Right ventricle myocardium inferior (tissue), 1 donor: ENCODE measurements at regions of chr1 and their contacts with region 1.

Region 1: DNA sequence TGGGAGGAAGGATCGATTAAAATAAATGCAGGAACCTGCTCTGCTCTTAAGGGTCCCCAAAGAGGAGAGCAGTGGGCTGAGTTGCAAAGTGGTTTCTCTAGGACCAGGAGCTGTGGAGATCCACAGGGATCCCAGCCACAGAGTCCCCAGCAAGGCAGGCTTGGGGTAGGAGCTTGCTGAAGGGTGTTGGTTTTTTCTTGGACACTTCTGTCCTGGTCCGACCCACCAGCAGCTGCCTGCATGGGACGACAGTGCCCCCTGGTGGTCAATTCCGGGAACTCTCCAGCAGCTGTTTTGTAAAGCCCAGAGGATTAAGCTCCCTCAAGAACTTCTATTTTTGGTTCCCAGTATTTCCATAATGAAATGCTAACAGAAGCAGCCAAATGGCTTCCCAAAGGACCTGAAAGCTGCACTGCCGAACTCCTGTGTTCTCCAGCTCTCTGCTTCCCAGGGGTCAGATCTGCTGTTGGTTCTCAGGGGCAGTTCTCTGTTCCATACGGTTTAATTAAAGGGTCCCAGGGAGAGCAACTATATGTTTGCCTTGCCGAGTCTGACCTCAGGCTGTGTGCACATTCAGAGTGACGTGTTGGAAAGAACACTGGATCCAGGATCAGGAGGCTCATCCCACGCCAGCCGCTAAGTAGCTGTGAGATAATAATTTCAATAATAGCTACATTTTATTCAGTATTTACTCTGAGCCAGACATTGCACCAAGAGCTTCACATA is 23.2 kb downstream of the NENF start:
- DNase-seq: peak; percentile 87
- ATAC-seq: peak; percentile 79

Region 2: DNA sequence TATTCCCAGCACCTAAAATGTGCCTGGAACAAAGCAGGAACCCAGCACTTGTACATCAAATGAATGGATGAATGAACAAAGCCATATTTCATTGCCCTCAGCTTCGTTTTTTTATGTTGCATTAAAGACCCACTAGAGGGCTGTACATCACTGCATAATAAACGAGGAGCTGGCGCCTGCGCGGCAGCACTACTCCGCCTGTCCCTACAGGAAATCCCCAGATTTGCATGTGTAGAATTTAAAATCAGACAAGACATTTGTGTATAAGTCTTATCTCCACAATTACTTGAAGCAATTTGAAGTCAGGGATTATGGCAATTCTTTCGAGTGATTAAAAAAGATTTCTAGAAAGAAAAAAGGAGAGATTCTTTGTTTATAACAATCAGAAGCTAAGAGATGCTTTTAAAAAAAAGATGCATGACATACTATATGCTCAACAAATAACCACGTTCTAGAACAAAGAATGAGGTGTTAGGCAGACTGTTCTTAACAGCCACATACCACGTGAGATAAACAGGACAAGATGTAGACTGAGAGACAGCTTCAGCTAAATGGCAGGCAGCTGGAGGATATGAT is 775.1 kb before region 1 on chr1:
- intact Hi-C with region 1: loop called (anchors 5 kb)
- DNase-seq: peak; percentile 74
- ATAC-seq: peak; percentile 92

Region 3: DNA sequence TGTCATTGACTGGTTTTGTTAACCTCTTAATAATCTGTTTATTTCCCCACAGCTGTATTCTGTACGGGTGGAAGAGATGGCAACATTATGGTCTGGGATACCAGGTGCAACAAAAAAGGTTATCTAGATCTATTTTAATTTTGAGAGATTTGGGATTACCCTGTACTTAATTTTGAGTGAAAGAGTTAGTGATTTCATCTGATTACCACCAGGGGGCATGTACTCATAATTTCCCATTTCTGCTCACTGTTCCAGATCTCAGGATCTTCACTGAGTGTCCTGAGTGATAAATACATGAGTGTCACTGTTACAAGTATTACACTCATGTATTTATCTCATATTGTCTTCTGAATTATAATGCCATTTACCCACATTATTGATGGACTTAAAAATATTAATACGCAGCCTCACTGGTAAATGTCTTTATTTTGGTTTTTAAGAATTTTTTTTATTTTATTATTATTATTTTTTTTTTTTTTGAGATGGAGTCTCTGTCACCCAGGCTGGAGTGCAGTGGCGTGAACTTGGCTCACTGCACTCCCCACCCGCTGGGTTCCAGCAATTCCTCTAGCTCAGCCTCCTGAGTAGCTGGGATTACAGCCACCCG is 393.0 kb before region 1 on chr1:
- intact Hi-C with region 1: loop called (anchors 2 kb)
- DNase-seq: no peak
- ATAC-seq: no peak

Region 4: GRCh38 chr1:212284744-212285684 is 171.0 kb before region 1 on chr1 and contains the start of gene PPP2R5A:
- intact Hi-C with region 1: loop called (anchors 5 kb)
- DNase-seq: peak; percentile 100
- ATAC-seq: peak; percentile 98
- total RNA-seq, gene PPP2R5A: 80.8 TPM

Region 5: GRCh38 chr1:212396638-212397037 is 59.3 kb before region 1 on chr1:
- intact Hi-C with region 1: no loop called
- DNase-seq: no peak
- ATAC-seq: no peak

Region 6: DNA sequence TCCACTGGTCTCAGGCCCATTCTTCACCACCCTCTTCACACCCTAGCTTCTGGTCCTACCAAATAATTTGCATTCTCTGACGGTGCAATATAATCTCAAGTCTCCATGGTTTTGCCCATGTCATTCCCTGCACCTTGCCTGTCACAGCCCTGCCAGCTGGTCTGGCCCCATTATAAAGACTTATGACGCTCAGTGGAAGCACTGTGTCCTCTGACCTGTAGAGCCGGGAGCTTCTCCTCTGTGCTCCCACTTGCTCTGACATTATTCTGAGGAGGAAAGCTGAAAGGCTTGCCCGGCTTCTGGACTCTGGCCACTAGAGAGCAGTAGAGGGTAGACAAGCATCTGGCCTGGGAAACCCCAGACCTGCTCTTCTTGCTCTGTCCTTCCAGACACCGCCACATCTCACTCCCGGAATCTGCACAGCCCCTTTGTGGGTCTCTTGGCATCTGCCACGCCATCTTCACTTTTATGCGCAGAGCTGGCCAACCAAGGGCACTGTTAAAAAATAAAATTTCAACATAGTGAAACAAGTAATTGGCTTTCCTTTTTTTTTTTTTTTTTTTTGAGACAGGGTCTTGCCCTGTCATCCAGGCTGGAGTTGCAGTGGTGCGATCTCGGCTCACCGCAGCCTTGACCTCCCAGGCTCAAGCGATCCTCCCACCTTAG is 21.2 kb after region 1 on chr1:
- intact Hi-C with region 1: no loop called
- DNase-seq: peak; percentile 80
- ATAC-seq: peak; percentile 95

Region 7: DNA sequence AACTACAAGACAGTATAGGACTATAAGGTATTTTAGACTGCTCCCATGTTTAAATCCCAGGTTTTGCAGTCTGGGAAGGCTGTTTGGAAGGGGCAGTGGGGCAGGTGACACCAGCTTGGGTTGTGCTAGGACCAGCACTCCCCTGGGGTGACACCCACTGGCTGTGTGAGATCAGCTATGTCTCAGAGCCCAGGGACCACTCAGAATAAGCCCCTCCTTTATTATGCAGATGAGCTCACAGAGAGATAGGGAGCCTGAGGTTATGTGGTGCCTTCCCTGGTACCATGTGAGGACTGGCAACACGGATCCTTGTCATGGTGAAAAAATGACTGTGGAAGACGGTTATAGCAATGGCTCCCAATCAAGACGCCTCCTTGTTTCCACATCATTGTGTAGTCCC is 47.7 kb after region 1 on chr1:
- intact Hi-C with region 1: no loop called
- DNase-seq: no peak
- ATAC-seq: no peak

Region 8: DNA sequence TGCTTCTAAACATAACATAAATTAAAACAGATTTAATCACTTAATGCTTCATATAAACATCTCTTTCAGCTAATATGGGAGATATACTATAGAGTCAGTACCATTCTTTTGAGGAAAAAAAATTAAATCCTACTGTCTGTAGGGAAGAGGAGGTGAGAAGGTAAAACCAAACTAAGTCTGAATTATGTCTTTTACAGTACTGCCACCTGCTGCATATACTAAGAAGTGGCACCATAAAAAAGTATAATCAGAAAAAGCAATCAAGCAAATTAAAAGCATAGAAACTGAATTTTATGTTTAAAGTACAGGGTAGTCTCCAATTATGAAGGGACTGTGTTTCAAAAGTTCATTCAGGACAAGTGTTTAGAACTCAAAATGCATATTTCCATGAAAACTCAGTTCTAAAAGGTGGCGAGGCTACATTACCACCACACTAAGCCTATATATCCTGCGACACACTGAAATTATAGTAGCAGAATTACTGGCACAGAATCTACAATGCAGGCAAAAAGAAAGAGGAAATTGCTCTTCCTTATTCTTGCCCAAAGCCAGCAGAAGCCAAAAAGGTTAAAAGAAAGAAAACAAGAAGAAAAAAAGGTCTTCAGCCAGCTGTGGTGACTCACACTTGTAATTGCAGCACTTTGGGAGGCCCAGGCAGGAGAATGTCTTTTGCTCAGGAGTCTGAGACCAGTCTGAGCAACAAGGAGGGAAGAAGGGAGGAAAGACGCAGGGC is 326.6 kb after region 1 on chr1:
- intact Hi-C with region 1: loop called (anchors 5 kb)
- DNase-seq: no peak
- ATAC-seq: peak; percentile 52